CD14-positive monocyte (primary cell): ENCODE measurements at regions of chr17 and their contacts with region 1.

Region 1: DNA sequence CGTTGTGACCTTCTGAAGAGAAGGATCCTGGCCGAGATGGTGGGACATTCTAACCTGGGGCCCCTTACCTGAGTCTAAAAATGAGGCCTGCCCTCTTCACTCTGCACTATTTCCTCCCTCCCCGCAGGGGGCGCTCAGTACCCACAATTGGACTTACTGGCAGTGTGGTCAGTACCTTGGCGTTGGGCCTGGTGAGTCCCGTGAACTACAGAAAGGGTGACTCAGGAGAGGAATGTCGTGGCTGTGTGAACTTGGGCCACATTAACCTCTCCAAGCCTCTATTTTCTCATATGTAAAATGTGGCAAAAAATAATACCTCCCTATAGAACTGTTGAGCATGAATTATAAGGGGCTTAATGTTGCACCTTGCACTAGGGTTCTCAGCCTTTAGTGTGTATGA is 3.9 kb downstream of the RSAD1 start:
- DNase-seq: peak; percentile 82 to 92 (median 85)
- H3K4me3 ChIP-seq: no peak overlapping the region
- H3K4me3 Mint-ChIP-seq: no peak overlapping the region
- H3K27ac ChIP-seq: no peak overlapping the region
- H3K27ac Mint-ChIP-seq: peak overlapping the region in 5 of 7 donors; percentile 38 to 83 (median 69)
- H3K4me1 ChIP-seq: peaks cover 33 to 48% of the 10 kb centered on the region in 2 donors
- H3K4me1 Mint-ChIP-seq: peaks cover 33% of the 10 kb centered on the region
- H3K27me3 ChIP-seq: no peaks in the 10 kb centered on the region
- H3K27me3 Mint-ChIP-seq: peaks cover 0 to 2% (median 0%) of the 10 kb centered on the region in 3 donors
- CTCF ChIP-seq: peak; percentile 94

Region 2: DNA sequence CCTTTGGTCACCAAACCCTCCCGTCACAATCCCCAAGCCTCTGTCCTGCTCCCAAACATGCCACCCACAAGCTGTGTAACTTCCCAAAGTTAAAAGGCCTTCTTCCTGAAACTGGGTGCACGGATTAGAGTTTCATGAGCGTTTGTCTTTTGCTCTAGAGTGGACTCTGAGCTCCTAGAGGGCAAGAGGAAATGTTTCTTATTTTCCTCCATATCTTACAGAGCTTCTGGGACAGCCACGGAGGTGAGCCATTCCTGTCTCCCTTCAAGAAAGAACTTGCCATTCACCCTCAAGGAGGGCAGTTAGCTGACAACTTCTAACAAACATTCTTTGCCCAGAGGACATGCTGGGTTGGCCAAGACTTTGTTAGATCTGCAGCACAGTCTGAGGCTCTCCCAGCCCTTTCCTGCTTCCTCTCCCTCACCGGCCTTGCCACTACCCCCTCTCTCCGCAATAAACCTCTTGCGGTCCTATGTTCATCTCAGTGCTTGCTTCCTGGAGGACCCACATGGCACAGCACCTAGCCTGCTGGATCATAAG is 23.1 kb after region 1 on chr17:
- intact Hi-C with region 1: loop called in 1 of 2 experiments (anchors 2 kb)
- DNase-seq: no peak
- H3K4me3 ChIP-seq: no peak overlapping the region
- H3K4me3 Mint-ChIP-seq: no peak overlapping the region
- H3K27ac ChIP-seq: no peak overlapping the region
- H3K27ac Mint-ChIP-seq: peak overlapping the region in 5 of 7 donors; percentile 35 to 78 (median 50)
- H3K4me1 ChIP-seq: peaks cover 17 to 29% of the 10 kb centered on the region in 2 donors
- H3K4me1 Mint-ChIP-seq: peaks cover 36% of the 10 kb centered on the region
- H3K27me3 ChIP-seq: no peaks in the 10 kb centered on the region
- H3K27me3 Mint-ChIP-seq: peaks cover 4 to 8% (median 5%) of the 10 kb centered on the region in 3 donors
- CTCF ChIP-seq: no peak

Region 3: DNA sequence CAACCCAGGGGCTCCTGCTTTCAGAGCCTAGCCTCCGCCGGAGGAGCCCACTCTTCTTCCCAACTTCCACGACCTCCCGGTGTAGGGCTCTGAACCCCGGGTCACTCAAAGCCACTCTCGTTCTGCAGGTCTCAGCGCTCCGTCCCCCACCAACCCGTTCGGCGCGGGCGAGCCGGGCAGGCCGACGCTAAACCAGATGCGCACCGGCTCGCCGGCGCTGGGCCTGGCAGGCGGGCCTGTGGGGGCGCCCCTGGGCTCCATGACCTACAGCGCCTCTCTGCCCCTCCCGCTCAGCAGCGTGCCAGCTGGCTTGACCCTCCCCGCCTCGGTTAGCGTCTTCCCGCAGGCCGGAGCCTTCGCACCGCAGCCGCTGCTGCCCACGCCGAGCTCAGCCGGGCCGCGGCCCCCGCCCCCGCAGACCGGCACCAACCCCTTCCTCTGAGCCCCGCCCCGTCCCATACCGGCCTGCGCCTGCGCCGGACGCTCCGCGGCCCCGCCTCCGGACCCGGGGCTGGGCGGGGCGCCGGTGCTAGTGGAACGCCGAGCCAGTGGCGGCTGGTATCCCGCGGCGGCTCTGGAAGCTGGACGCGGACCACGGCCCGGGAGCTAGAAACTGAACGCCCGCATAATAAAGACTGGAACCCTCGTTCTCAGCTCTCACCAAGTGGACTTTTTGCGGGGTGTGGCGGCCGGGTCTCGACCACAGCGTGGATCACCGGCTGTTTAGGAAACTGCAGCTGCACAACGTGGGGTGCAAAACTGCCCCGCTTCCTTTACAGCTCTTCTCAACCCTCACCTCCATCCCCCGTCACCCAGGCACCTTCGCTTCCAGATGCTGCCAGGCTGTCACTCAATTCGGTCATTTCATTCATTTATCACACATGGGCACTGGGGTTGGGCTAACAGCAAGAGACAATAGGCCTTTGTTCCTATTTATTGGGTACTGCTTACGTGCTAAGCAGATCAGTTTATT is 59.5 kb after region 1 on chr17:
- intact Hi-C with region 1: loop called (anchors 5 to 10 kb)
- DNase-seq: peak; percentile 61 to 77 (median 76)
- H3K4me3 ChIP-seq: peak overlapping the region; percentile 35 to 85 (median 48)
- H3K4me3 Mint-ChIP-seq: peak overlapping the region; percentile 84 to 95
- H3K27ac ChIP-seq: no peak overlapping the region
- H3K27ac Mint-ChIP-seq: peak overlapping the region in 3 of 7 donors; percentile 46 to 74 (median 60)
- H3K4me1 ChIP-seq: peaks cover 20 to 28% of the 10 kb centered on the region in 2 donors
- H3K4me1 Mint-ChIP-seq: peaks cover 27% of the 10 kb centered on the region
- H3K27me3 ChIP-seq: no peaks in the 10 kb centered on the region
- H3K27me3 Mint-ChIP-seq: peaks cover 11 to 26% (median 18%) of the 10 kb centered on the region in 3 donors
- CTCF ChIP-seq: peak; percentile 29

Region 4: GRCh38 chr17:50626037-50626574 is 143.6 kb after region 1 on chr17:
- intact Hi-C with region 1: loop called in 1 of 2 experiments (anchors 5 kb)
- DNase-seq: peak; percentile 45 to 69 (median 62)
- H3K4me3 ChIP-seq: no peak overlapping the region
- H3K4me3 Mint-ChIP-seq: no peak overlapping the region
- H3K27ac ChIP-seq: no peak overlapping the region
- H3K27ac Mint-ChIP-seq: no peak overlapping the region
- H3K4me1 ChIP-seq: peaks cover 15 to 41% of the 10 kb centered on the region in 2 donors
- H3K4me1 Mint-ChIP-seq: peaks cover 19% of the 10 kb centered on the region
- H3K27me3 ChIP-seq: peaks cover 0 to 19% of the 10 kb centered on the region in 2 donors
- H3K27me3 Mint-ChIP-seq: peaks cover 39 to 55% (median 46%) of the 10 kb centered on the region in 3 donors
- CTCF ChIP-seq: peak; percentile 64

Region 5: GRCh38 chr17:50681263-50682210 is 199.0 kb after region 1 on chr17:
- intact Hi-C with region 1: loop called in 1 of 2 experiments (anchors 5 kb)
- DNase-seq: peak; percentile 57 to 72 (median 67)
- H3K4me3 ChIP-seq: peak overlapping the region in 1 of 3 experiments; percentile 47
- H3K4me3 Mint-ChIP-seq: peak overlapping the region; percentile 60 to 91
- H3K27ac ChIP-seq: no peak overlapping the region
- H3K27ac Mint-ChIP-seq: peak overlapping the region in 2 of 7 donors; percentile 31 to 33
- H3K4me1 ChIP-seq: peaks cover 5 to 9% of the 10 kb centered on the region in 2 donors
- H3K4me1 Mint-ChIP-seq: peaks cover 9% of the 10 kb centered on the region
- H3K27me3 ChIP-seq: no peaks in the 10 kb centered on the region
- H3K27me3 Mint-ChIP-seq: peaks cover 11 to 14% (median 13%) of the 10 kb centered on the region in 3 donors
- CTCF ChIP-seq: peak; percentile 36

Region 6: DNA sequence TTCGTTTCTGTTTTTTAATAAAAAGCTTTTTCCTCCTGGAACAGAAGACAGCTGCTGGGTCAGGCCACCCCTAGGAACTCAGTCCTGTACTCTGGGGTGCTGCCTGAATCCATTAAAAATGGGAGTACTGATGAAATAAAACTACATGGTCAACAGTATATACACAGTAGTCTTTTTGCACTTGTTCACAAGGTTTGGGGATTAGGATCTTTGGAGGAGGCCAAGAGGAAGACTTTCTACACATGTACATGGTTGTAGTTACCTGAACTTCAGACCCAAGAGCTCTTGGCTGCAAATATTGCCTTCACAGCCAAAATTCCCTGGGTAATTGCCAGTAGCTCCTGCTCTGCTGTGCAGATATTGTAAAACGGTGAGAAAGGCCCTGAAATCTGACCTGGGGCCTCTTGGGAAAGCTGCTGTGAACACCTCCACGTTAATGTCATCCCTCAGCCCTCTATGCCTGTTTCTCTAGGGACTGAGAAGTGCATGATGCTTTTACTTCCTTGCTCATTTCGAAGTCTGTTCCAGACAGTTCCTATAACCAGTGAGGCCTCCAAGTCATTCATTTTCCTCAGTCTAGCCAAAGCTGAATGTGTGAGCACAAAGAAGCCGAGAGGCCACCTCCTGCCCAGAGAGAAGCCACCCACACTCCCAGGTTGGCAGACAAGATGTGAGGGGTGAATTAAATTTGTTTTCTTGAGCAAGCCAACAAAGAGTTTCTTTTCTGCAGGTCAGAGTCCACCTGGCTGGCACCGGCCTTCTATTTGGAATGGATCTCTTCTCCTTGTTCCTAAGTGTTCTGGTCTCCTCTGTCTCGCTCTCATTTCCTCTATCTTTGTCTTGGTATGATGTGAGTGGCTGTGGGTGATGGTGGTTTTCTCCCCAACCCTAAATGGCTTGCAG is 209.3 kb after region 1 on chr17:
- intact Hi-C with region 1: no loop called
- DNase-seq: no peak
- H3K4me3 ChIP-seq: no peak overlapping the region
- H3K4me3 Mint-ChIP-seq: no peak overlapping the region
- H3K27ac ChIP-seq: no peak overlapping the region
- H3K27ac Mint-ChIP-seq: peak overlapping the region in 1 of 7 donors; percentile 13
- H3K4me1 ChIP-seq: no peaks in the 10 kb centered on the region
- H3K4me1 Mint-ChIP-seq: no peaks in the 10 kb centered on the region
- H3K27me3 ChIP-seq: no peaks in the 10 kb centered on the region
- H3K27me3 Mint-ChIP-seq: peaks cover 0 to 2% (median 0%) of the 10 kb centered on the region in 3 donors
- CTCF ChIP-seq: no peak